Activated CD4-positive, alpha-beta memory T cell treated with anti-CD3 and anti-CD28 coated beads for 36 hours (primary cell): ENCODE measurements at regions of chr2 and their contacts with region 1.

Region 1: GRCh38 chr2:56183643-56184499 is at the start of gene CCDC85A:
- DNase-seq: peak; percentile 75
- H3K4me3 Mint-ChIP-seq: peak within 1 kb of the TSS; percentile 31
- H3K27ac Mint-ChIP-seq: no peak within 1 kb of the TSS
- H3K4me1 Mint-ChIP-seq: peaks cover 8% of the 10 kb centered on the region
- H3K27me3 Mint-ChIP-seq: peaks cover 47% of the 10 kb centered on the region
- total RNA-seq, gene CCDC85A: not detected

Region 2: DNA sequence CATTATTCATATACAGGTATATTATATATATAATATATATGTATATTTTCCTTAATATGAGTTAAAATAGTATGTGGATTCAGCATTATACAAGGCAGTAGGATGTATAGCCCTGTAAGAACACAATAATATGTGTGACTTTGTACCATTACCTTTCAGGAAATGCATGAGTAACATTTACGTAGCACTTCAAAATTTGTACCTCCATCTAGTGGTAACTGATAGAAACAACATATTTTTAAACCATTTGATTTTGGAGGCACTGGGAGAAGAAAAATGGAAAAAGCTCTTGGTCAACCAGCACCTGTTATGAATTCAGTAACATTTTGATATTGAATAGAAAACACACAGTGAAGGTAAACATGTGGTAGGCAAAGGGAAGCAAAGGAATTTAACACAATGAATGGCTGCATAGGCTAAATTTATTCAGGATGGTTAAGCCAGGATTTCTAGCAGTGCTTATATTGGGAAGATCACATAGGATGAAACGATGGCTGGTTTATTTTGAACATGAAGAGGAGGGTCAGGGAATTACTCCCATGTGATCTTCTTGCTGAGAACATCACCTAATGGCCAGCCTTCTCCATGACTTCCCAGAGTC is 565.4 kb after region 1 on chr2:
- CTCF ChIA-PET with region 1: no interaction called
- POLR2A ChIA-PET with region 1: no interaction called
- intact Hi-C with region 1: loop called (anchors 2 kb)
- DNase-seq: no peak
- H3K4me3 Mint-ChIP-seq: no peak overlapping the region
- H3K27ac Mint-ChIP-seq: no peak overlapping the region
- H3K4me1 Mint-ChIP-seq: no peaks in the 10 kb centered on the region
- H3K27me3 Mint-ChIP-seq: no peaks in the 10 kb centered on the region

Region 3: DNA sequence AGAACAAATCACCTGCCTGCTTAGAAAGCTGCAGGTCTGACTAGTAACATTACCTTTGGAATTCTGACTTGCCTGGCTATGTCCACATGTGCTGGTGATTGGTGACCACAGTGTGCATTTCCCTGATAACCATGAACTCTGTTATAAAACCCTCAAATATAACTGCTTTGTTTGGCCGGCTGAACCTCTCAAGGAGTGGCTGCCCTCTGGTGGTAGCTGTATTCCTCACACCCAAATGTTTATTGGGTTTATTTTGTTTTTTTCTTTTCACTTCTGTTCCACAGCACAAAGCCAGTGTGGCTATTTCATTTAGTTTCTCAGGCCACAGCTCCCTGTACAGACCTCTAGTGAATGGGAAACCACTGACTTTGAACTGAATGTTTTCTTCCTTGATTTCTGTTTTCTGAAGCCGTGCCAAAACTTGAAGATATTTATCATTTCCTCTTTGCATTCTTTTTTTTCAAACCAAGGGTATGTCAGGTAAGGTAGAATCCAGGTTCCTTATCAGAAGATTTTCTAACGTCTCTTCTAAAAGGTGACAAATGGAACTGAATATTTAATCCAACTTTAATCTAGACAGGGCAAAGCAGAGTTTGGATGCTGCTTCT is 1313.7 kb after region 1 on chr2:
- CTCF ChIA-PET with region 1: no interaction called
- POLR2A ChIA-PET with region 1: no interaction called
- intact Hi-C with region 1: loop called (anchors 5 kb)
- DNase-seq: peak; percentile 27
- H3K4me3 Mint-ChIP-seq: no peak overlapping the region
- H3K27ac Mint-ChIP-seq: no peak overlapping the region
- H3K4me1 Mint-ChIP-seq: no peaks in the 10 kb centered on the region
- H3K27me3 Mint-ChIP-seq: no peaks in the 10 kb centered on the region

Region 4: GRCh38 chr2:57516698-57517340 is 1332.9 kb after region 1 on chr2:
- CTCF ChIA-PET with region 1: interaction called, 17 read pairs
- POLR2A ChIA-PET with region 1: no interaction called
- intact Hi-C with region 1: loop called (anchors 2 kb)
- DNase-seq: no peak
- H3K4me3 Mint-ChIP-seq: no peak overlapping the region
- H3K27ac Mint-ChIP-seq: no peak overlapping the region
- H3K4me1 Mint-ChIP-seq: no peaks in the 10 kb centered on the region
- H3K27me3 Mint-ChIP-seq: no peaks in the 10 kb centered on the region